ENCODE measurements at regions of chr11 and their contacts with region 1.

Region 1: DNA sequence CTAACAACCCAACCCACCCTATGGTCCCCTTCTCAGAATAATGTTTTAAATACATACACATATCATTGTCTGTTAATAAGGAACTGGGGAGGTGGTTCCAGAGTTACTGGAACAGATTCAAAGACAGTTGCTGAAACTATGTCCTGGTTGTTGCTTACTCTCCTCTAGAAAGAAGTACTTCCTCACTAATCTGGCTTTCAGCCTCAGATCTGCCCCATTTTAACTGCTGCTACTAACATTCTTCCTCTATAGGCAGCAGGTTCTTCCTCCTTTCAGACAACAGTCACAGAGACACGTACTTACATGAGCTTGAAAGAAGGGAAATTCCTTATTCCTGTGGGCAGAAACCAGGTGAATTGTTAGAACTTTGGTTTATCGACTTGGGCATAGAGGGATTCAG is 8.1 kb upstream of the NEU3 start:
- DNase-seq: no peak
- H3K4me3 ChIP-seq: no peak overlapping the region
- H3K27ac ChIP-seq: no peak overlapping the region
- H3K4me1 ChIP-seq: no peaks in the 10 kb centered on the region
- H3K27me3 ChIP-seq: no peaks in the 10 kb centered on the region
- CTCF ChIP-seq: no peak

Region 2: DNA sequence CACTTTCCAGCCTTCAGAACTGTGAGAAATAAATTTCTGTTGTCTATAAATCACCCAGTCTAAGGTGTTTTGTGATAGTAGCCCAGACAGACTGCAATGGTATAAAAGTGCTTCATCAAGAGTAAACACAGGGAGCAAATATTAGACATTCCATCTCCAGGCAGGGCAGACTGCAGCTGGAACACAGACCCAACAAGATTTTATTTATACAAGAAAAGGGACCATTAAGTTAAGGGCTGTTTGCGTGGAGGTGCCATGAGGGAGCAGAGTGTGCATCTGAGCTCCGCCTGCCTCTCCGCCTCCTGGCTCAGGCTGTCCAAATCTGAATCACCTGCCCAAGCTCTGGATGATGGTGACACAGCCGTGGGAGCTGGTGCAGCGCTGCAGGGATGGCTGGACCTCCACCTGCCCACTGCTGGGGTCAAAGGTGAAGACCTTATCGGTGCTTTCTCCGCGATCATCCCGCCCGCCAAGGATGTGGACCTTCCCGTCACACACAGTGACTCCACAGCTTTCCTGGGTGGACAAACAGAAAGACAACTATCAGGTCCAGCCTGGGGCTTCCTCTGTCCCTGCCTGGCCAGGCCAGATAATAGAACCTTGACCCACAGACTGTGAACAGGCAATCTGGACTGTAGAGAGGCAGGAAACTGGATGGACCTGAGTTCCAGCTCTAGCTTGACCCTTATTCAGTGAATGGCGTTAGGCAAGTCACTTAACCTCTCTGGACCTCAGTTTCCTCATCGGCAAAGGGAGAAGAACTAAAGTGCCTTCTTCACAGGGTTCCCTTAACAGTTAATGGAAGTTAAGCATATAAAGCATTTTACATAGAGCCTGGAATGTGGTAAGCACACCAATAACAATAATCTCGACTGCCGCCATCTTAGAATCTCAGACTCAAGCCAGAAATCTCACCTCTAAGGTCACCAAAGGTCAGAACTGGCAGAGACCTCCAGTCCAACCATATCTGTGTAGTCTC is 441.9 kb after region 1 on chr11:
- CTCF ChIA-PET with region 1: interaction called, 16 read pairs
- POLR2A ChIA-PET with region 1: no interaction called
- intact Hi-C with region 1: no loop called
- DNase-seq: peak in 1 of 2 experiments; percentile 65
- H3K4me3 ChIP-seq: no peak overlapping the region
- H3K27ac ChIP-seq: peak overlapping the region; percentile 58
- H3K4me1 ChIP-seq: peaks cover 31% of the 10 kb centered on the region
- H3K27me3 ChIP-seq: no peaks in the 10 kb centered on the region
- CTCF ChIP-seq: no peak

Measured in PC-9 (cell line).